Heart right ventricle (tissue), 16 donors: ENCODE measurements at regions of chr9 and their contacts with region 1.

Region 1: DNA sequence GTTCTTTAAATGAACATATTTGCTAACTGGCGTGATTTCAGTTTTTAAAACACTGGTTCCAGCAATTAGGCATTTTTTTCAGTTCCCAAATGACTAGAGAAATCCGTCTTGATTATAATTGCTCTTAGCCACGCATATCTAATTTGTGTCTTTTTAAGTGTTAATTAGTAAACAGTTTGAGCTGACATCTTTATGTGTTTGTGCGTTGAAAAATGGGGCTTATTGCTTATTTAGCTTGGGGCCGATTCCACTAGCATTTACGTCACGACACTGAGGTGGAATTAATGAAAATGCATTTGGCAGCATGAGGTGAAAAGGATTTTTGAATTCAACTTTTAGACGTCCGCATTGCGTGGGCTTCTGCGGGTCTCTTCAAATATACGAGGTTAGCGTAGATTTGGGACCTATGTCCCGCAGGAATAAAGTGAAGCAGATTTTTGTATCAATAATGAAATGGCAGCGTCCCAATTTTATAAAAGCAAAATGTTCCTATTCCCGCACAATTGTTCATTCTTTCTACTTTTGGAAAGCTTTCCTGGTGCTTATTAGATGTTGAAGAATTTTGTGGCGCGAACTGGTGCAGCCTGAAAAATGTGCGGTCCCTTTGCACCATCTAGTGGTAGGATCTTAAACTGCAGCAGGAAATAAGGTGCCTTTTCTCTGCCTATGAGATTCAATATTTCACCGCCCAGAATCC is 122.7 kb upstream of the LMX1B start:
- DNase-seq: peak in 1 of 2 donors; percentile 55
- ATAC-seq: peak in 5 of 8 donors; percentile 57 to 69 (median 59)
- H3K4me3 ChIP-seq: no peak overlapping the region
- H3K27ac ChIP-seq: no peak overlapping the region
- H3K4me1 ChIP-seq: peaks cover 0 to 16% (median 0%) of the 10 kb centered on the region in 9 donors
- H3K27me3 ChIP-seq: no peaks in the 10 kb centered on the region
- CTCF ChIP-seq: peak; percentile 83 to 97 (median 90)

Region 2: DNA sequence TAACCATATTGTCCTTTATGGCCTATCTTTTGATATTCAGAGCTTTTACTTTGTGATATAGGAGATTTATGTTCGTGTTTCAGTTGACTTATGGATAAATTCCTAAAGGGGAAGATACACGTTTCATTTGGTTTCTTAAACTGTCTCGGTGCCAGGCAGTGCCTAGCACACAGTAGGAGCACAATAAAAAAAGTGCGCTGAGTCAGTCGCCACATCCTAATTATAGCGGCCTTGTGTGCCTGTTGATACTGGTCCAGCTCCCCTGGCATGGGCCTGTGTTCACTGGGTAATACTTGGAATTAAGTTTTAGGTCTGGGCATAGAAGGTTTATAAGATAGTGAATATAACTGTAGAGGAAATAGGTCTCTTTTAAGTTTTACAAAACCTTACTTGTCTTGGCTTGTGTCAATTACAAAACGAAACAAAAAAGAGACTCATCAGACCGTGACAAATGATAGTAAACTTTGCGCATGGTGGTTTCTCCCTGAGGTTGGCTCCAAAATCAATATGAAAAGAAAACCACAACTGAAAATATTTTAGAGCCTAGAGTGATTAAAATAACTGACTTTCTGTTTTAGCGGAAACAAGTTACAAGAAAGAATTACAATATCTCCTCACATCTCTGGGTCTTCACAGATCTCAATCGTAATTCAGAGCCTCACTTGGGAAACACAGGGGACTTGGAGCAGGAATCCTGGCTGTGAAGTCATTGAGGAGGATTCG is 79.6 kb before region 1 on chr9:
- intact Hi-C with region 1: loop called in 1 of 10 experiments (anchors 5 kb)
- DNase-seq: no peak
- ATAC-seq: no peak
- H3K4me3 ChIP-seq: no peak overlapping the region
- H3K27ac ChIP-seq: peak overlapping the region in 1 of 10 donors; percentile 56
- H3K4me1 ChIP-seq: peaks cover 0 to 26% (median 10%) of the 10 kb centered on the region in 9 donors
- H3K27me3 ChIP-seq: no peaks in the 10 kb centered on the region
- CTCF ChIP-seq: no peak

Region 3: DNA sequence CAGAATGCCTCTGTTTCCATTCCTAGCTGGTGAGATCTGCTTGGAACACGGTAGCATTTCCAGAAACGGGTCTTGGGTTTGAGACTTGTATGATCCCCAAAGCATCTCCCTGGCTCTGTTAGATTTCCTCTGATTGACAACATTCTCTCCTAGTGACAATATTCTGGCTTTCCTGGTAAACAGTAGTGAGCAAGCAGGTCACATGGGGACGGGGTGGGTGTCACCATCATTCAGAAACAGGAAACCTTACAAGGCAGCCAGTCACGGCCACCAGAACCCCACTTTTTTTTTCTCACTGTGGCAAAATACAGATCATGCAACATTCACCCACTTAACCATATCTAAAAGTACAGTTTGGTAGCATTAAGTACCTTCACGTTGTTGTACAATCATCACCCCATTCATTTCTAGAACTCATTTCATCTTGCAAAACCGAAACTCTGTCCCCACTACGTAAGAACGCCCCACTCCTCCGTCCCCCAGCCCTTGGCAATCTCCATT is 32.6 kb after region 1 on chr9:
- intact Hi-C with region 1: no loop called
- DNase-seq: no peak
- ATAC-seq: peak in 7 of 8 donors; percentile 27 to 62 (median 41)
- H3K4me3 ChIP-seq: peak overlapping the region in 1 of 10 donors; percentile 29
- H3K27ac ChIP-seq: peak overlapping the region in 2 of 10 donors; percentile 40 to 55
- H3K4me1 ChIP-seq: peaks cover 2 to 32% (median 12%) of the 10 kb centered on the region in 9 donors
- H3K27me3 ChIP-seq: peaks cover 0 to 83% (median 65%) of the 10 kb centered on the region in 7 donors
- CTCF ChIP-seq: no peak

Region 4: GRCh38 chr9:126704873-126705766 is 214.1 kb after region 1 on chr9:
- intact Hi-C with region 1: no loop called
- DNase-seq: peak; percentile 68 to 78
- ATAC-seq: peak; percentile 57 to 88 (median 73)
- H3K4me3 ChIP-seq: peak overlapping the region in 7 of 10 donors; percentile 5 to 25 (median 15)
- H3K27ac ChIP-seq: no peak overlapping the region
- H3K4me1 ChIP-seq: peaks cover 6 to 16% (median 14%) of the 10 kb centered on the region in 9 donors
- H3K27me3 ChIP-seq: peaks cover 11 to 71% (median 58%) of the 10 kb centered on the region in 7 donors
- CTCF ChIP-seq: peak; percentile 75 to 90 (median 86)